Heart right ventricle (tissue), 16 donors: ENCODE measurements at regions of chr4 and their contacts with region 1.

Region 1: GRCh38 chr4:151117371-151117962 is 18.0 kb downstream of the RPS3A start:
- DNase-seq: peak in 1 of 2 donors; percentile 68
- ATAC-seq: peak in 7 of 8 donors; percentile 47 to 66 (median 59)
- H3K4me3 ChIP-seq: no peak overlapping the region
- H3K27ac ChIP-seq: peak overlapping the region in 4 of 10 donors; percentile 20 to 42 (median 34)
- H3K4me1 ChIP-seq: peaks cover 0 to 24% (median 9%) of the 10 kb centered on the region in 9 donors
- H3K27me3 ChIP-seq: no peaks in the 10 kb centered on the region
- CTCF ChIP-seq: peak; percentile 41 to 85 (median 77)

Region 2: DNA sequence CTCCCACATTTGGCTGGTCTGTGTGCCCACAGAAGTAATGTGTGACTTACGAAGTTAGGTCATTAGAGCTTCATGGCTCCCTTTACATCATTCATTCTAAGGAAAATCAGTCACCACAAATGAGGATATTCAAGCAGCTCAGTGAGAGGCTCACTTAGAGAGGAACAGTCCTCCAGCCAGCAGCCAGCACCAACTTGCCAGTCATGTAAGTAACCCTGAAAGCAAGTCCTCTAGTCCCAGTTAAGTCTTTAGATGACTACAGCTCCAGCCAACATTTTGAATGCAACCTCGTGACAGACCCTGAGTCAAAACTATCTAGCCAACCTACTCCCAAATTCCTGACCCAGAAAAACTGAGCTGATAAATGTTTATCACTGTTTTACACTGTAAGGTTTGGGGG is 173.6 kb before region 1 on chr4:
- intact Hi-C with region 1: no loop called
- DNase-seq: no peak
- ATAC-seq: no peak
- H3K4me3 ChIP-seq: no peak overlapping the region
- H3K27ac ChIP-seq: no peak overlapping the region
- H3K4me1 ChIP-seq: peaks cover 0 to 8% (median 0%) of the 10 kb centered on the region in 9 donors
- H3K27me3 ChIP-seq: no peaks in the 10 kb centered on the region
- CTCF ChIP-seq: no peak

Region 3: GRCh38 chr4:151604238-151604637 is 486.8 kb after region 1 on chr4:
- intact Hi-C with region 1: loop called in 1 of 10 experiments (anchors 10 kb)
- DNase-seq: no peak
- ATAC-seq: no peak
- H3K4me3 ChIP-seq: no peak overlapping the region
- H3K27ac ChIP-seq: no peak overlapping the region
- H3K4me1 ChIP-seq: peaks cover 0 to 6% (median 0%) of the 10 kb centered on the region in 9 donors
- H3K27me3 ChIP-seq: no peaks in the 10 kb centered on the region
- CTCF ChIP-seq: peak in 6 of 9 donors; percentile 17 to 49 (median 36)